ENCODE measurements at regions of chr20 and their contacts with region 1.

Region 1: DNA sequence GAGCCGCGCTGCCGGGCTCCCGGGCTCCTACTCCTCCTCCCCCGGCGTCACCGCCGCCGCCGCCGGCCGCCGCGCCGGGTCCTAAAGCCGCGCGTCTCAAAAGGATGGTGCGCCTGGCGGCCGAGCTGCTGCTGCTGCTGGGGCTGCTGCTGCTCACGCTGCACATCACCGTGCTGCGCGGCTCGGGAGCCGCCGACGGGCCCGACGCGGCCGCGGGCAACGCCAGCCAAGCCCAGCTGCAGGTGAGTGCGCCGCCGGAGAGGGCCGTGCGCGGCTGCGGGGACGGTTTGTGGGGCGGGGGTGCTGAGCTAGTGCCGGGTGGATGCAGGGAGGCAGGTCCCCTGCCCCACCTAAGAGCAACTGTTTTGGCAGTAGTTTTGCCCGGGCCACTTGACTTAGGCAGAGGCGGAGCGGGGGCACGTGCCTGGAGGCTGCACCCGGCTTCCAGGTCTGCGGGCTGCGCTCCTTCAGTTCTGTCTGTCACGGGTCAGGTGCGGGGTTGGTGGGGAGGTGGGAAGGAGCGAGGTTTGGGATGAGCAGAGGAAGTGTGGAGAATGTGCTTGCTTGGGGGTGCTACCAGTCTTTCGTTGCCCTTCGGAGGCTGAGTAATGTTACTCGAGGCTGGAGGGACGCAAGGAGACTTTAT is 722 bp downstream of the ISM1 start:
- DNase-seq: peak; percentile 74
- ATAC-seq: no peak

Region 2: DNA sequence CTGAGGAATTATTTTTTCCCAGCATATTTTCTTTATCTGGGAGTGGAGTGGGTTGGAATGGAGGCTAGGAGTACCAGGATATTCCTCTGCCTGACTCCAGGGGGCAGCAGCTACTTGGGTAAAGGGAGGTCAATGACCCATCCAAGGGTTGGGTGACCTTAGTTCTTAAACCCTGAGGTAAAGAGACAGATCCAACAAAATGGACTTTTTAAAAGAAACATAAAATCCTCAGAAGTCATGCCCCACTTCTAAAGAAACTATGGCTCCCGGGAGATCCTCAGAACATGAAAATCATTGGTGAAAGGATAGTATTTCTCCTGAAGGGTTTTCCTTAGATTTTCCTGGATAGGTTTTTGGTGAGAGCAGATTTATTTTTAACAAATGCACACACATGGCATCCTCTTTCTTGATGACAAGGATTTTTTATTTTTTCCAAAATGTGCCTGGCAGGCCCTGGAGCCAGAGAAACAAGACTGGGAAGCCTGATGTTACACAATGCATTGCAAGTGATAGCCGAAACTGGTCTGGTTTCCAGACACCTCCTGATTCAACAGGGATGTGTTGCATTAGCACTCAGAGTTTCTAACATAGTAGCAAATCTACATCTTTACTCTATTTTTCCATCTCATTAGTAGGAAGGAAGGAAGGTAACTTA is 1545.0 kb before region 1 on chr20:
- intact Hi-C with region 1: no loop called
- DNase-seq: no peak
- ATAC-seq: peak; percentile 92

Region 3: GRCh38 chr20:13261460-13262301 is 39.9 kb after region 1 on chr20:
- intact Hi-C with region 1: loop called (anchors 2 kb)
- DNase-seq: no peak
- ATAC-seq: no peak

Region 4: DNA sequence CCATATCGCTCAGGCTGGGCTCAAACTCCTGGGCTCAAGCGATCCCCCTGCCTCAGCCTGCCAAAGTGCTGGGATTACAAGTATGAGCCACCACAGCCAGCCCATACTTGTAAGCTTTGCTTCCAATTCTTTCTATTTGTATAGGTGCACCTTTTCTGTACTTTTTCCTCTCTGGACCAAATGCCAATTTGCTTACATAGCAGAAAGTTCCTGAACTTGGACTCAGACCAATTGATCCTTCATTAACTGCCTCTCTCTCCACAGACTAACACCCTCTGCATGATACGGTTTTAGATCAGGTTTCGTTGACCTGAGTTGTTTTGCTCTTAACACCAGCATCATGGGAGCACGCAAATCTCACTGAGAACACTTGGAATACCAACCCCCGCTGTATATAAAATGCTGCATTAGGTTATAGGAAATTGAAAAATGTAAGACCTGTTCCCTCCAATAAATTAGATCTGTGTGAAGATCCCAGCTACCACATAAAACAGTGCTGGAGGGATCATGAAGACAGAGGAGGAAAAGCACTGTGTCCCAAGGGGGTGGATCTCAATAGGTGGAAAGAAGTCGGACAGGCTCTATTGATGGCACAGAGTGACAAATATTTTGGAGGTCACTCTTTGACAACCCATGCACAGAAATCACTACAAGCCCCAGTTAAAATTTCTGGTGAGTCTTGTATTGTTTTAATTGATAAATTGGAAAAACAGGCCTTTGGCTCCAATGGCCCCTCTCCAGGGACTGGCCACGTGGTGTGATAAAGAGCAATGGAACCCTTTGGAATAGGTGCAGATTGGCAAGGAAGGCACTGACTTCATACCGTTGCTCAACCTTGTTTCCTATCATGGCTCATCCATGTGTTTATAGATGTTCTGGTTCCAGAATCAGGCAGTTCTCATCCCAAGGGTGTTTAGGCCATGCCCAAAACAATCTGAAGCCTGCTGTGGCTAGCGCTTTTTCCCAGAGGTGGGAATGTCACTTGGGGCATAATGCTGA is 50.5 kb after region 1 on chr20:
- intact Hi-C with region 1: loop called (anchors 2 kb)
- DNase-seq: no peak
- ATAC-seq: no peak